Naive thymus-derived CD4-positive, alpha-beta T cell (primary cell): ENCODE measurements at regions of chr4 and their contacts with region 1.

Region 1: GRCh38 chr4:99462875-99463464 is 27.8 kb upstream of the ADH7 start:
- DNase-seq: peak in 8 of 9 donors; percentile 16 to 62 (median 44)
- ATAC-seq: peak; percentile 82
- H3K4me3 ChIP-seq: no peak overlapping the region
- H3K4me3 Mint-ChIP-seq: no peak overlapping the region
- H3K27ac ChIP-seq: no peak overlapping the region
- H3K27ac Mint-ChIP-seq: no peak overlapping the region
- H3K4me1 ChIP-seq: no peaks in the 10 kb centered on the region
- H3K4me1 Mint-ChIP-seq: no peaks in the 10 kb centered on the region
- H3K27me3 ChIP-seq: no peaks in the 10 kb centered on the region
- H3K27me3 Mint-ChIP-seq: peaks cover 0 to 35% (median 8%) of the 10 kb centered on the region in 5 donors

Region 2: DNA sequence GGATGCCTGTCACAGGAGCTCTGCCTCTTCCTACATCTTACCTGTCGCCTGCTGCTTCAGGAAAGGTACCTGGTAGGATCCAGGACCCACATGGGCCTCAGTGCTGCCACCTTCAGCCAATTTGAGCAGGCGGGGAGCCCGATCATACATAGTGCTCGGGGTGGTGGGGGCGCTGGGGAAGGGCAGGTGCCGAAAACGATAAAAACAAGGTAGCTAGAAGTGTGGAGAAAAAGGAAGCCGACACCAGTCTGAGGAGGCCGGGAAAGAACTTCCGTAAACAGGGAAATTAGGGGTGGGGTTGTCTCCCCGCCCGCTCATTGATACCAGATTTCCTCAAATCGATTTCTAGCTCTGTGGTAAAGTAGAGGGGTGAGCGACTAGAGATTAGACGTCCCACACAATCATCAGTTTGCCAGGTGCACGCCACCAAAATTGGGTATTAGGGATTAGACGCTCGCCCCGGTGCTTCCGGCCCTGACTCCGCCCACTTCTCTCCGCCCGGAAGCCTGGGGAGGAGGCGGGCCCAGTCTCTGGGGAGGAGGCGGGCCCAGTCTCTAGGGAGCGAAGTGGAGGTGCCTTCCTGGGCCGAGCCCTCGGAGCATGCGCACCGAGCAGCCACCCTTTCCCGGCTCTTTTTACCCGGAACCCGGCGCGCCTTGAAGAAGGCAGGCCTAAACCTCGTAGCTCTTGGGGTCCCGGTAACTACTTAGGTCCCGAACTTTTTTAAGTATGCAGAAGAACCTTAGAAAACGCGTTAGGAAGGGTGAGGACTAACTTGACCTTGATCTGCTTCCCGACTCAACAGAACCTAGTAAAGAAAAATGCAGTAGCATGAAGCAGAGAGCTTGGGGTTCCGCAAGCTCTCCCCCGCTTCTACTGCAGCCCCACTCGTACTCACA is 1319.7 kb before region 1 on chr4 and contains the start of gene STPG2:
- CTCF ChIA-PET with region 1: no interaction called
- POLR2A ChIA-PET with region 1: no interaction called
- intact Hi-C with region 1: loop called in 1 of 2 experiments (anchors 5 kb)
- DNase-seq: peak; percentile 85 to 93 (median 91)
- ATAC-seq: peak; percentile 100
- H3K4me3 ChIP-seq: peak within 1 kb of the TSS; percentile 85
- H3K4me3 Mint-ChIP-seq: peak within 1 kb of the TSS; percentile 87 to 99 (median 94)
- H3K27ac ChIP-seq: peak within 1 kb of the TSS; percentile 84
- H3K27ac Mint-ChIP-seq: peak within 1 kb of the TSS; percentile 96 to 99 (median 98)
- H3K4me1 ChIP-seq: peaks cover 6 to 10% of the 10 kb centered on the region in 2 donors
- H3K4me1 Mint-ChIP-seq: peaks cover 12 to 28% (median 24%) of the 10 kb centered on the region in 7 donors
- H3K27me3 ChIP-seq: no peaks in the 10 kb centered on the region
- H3K27me3 Mint-ChIP-seq: peaks cover 0 to 16% (median 0%) of the 10 kb centered on the region in 5 donors
- total RNA-seq, gene STPG2: 0.19 to 0.47 (median 0.30) TPM in 4 of 5 experiments, not detected in the other

Region 3: DNA sequence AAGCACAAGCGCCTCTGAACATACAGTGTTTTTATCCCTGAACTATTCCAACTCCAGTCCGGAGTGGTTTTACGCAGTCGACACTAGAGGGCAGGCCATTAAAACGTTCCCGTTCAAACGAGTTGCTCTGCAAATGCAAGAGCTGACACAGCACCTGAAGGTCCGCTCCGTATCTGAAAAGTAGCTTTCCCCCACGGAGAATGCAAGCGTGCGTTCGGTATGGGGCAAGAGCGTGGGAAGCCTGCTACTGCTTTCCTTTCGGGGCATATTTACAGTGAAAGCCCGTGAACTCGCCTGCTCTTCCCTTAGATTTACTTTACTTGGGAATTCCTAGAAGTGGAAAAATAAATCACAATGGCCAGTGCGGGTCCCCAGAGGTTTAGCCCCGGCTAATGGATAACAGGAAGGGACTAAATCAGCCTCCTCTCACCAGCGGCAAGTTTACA is 995.3 kb before region 1 on chr4:
- CTCF ChIA-PET with region 1: no interaction called
- POLR2A ChIA-PET with region 1: no interaction called
- intact Hi-C with region 1: loop called in 1 of 2 experiments (anchors 1 kb)
- DNase-seq: peak; percentile 14 to 76 (median 65)
- ATAC-seq: peak; percentile 93
- H3K4me3 ChIP-seq: peak overlapping the region; percentile 11
- H3K4me3 Mint-ChIP-seq: peak overlapping the region; percentile 66 to 87 (median 74)
- H3K27ac ChIP-seq: no peak overlapping the region
- H3K27ac Mint-ChIP-seq: peak overlapping the region in 3 of 9 donors; percentile 24 to 34 (median 32)
- H3K4me1 ChIP-seq: no peaks in the 10 kb centered on the region
- H3K4me1 Mint-ChIP-seq: peaks cover 7 to 40% (median 24%) of the 10 kb centered on the region in 7 donors
- H3K27me3 ChIP-seq: no peaks in the 10 kb centered on the region
- H3K27me3 Mint-ChIP-seq: no peaks in the 10 kb centered on the region

Region 4: GRCh38 chr4:99117876-99118693 is 344.9 kb before region 1 on chr4:
- CTCF ChIA-PET with region 1: interaction called, 4 read pairs
- POLR2A ChIA-PET with region 1: no interaction called
- intact Hi-C with region 1: loop called (anchors 1 kb)
- DNase-seq: peak in 3 of 9 donors; percentile 0 to 18 (median 7)
- ATAC-seq: no peak
- H3K4me3 ChIP-seq: no peak overlapping the region
- H3K4me3 Mint-ChIP-seq: no peak overlapping the region
- H3K27ac ChIP-seq: no peak overlapping the region
- H3K27ac Mint-ChIP-seq: peak overlapping the region in 1 of 9 donors; percentile 44
- H3K4me1 ChIP-seq: no peaks in the 10 kb centered on the region
- H3K4me1 Mint-ChIP-seq: no peaks in the 10 kb centered on the region
- H3K27me3 ChIP-seq: no peaks in the 10 kb centered on the region
- H3K27me3 Mint-ChIP-seq: peaks cover 0 to 7% (median 0%) of the 10 kb centered on the region in 5 donors

Region 5: DNA sequence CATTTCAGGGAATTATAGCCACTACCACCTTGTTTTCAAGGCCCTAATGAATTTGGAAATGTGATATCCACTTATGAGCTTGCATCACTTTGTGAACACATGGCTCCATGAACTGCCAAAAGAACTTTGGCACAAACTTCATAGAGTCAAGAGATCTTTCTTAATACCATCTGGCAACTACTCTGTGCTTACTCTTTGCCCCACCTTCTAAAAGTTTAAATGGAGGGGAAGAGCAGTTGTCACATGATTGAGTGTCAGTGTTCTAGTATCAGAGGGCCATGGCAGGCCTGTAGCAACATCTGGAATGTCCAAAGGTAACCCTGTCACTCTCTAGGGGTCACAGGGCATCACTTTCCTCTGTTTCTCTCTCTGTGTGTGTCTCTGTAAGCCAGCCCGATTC is 139.2 kb before region 1 on chr4:
- CTCF ChIA-PET with region 1: no interaction called
- POLR2A ChIA-PET with region 1: no interaction called
- intact Hi-C with region 1: no loop called
- DNase-seq: no peak
- ATAC-seq: no peak
- H3K4me3 ChIP-seq: no peak overlapping the region
- H3K4me3 Mint-ChIP-seq: no peak overlapping the region
- H3K27ac ChIP-seq: no peak overlapping the region
- H3K27ac Mint-ChIP-seq: no peak overlapping the region
- H3K4me1 ChIP-seq: no peaks in the 10 kb centered on the region
- H3K4me1 Mint-ChIP-seq: no peaks in the 10 kb centered on the region
- H3K27me3 ChIP-seq: no peaks in the 10 kb centered on the region
- H3K27me3 Mint-ChIP-seq: peaks cover 0 to 23% (median 12%) of the 10 kb centered on the region in 5 donors

Region 6: DNA sequence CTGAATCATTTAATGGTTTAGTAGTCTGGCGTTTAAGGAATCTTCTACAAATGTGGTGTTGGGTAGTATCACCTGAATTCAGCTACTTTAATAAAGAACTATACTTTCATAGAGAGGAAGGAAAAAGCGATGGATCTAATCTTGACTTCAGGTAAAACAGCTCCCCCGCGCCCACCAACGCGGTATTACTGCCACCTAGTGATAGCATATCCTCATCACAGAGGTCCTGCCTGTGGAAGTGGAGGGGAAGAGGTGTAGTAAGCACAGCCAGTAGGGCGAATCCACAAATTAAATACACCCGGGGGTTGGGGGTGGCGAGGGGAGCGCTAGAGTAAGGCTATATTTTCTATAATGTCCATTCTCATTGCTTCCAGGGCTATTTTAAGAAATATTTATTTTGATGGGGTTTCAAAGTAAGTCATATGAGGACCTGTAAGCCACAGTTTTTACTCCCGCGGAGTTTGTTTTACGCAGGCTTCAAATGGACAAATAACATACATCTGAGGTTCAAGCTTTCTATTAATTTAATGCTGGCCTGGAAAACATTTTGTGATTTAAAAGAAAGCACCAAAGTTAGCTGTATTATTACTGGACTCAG is 345.4 kb after region 1 on chr4:
- CTCF ChIA-PET with region 1: no interaction called
- POLR2A ChIA-PET with region 1: no interaction called
- intact Hi-C with region 1: loop called (anchors 1 to 5 kb)
- DNase-seq: peak; percentile 28 to 78 (median 72)
- ATAC-seq: peak; percentile 92
- H3K4me3 ChIP-seq: no peak overlapping the region
- H3K4me3 Mint-ChIP-seq: no peak overlapping the region
- H3K27ac ChIP-seq: no peak overlapping the region
- H3K27ac Mint-ChIP-seq: no peak overlapping the region
- H3K4me1 ChIP-seq: no peaks in the 10 kb centered on the region
- H3K4me1 Mint-ChIP-seq: peaks cover 4 to 10% (median 5%) of the 10 kb centered on the region in 7 donors
- H3K27me3 ChIP-seq: no peaks in the 10 kb centered on the region
- H3K27me3 Mint-ChIP-seq: peaks cover 0 to 17% (median 7%) of the 10 kb centered on the region in 5 donors